Cardiac septum (tissue), 1 donor: ENCODE measurements at regions of chr14 and their contacts with region 1.

Region 1: GRCh38 chr14:77616454-77617229 is at the start of gene SPTLC2:
- DNase-seq: peak; percentile 99
- total RNA-seq, gene SPTLC2: 13.5 TPM

Region 2: DNA sequence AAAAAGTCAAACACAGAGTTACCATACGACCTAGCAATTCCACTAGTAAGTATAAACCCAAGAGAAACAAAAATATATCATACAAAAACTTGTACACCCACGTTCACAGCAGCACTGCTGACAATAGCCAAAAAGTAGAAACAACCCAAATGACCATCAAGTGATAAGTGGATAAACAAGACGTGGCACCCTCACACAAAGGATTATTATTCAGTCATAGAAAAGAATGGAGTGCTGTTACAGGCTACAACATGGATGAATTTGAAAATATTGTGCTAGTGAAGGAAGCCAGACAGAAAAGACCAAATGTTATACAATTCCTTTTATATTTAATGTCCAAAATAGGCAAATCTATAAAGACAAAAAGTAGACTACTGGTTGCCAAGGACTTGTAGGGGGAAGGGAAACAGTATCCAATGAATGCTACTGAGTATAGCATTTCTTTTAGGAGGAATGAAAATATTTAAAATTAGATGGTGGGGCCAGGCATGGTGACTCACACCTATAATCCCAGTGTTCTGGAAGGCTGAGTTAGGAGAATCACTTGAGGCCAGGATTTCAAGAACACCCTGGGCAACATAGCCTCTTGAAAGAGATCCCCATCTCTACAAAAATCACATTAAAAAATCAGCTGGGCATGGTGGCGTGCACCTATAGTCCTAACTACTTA is 42.1 kb before region 1 on chr14:
- intact Hi-C with region 1: no loop called
- DNase-seq: no peak

Region 3: GRCh38 chr14:77641534-77642341 is 25.1 kb after region 1 on chr14:
- intact Hi-C with region 1: loop called (anchors 1 kb)
- DNase-seq: peak; percentile 90

Region 4: DNA sequence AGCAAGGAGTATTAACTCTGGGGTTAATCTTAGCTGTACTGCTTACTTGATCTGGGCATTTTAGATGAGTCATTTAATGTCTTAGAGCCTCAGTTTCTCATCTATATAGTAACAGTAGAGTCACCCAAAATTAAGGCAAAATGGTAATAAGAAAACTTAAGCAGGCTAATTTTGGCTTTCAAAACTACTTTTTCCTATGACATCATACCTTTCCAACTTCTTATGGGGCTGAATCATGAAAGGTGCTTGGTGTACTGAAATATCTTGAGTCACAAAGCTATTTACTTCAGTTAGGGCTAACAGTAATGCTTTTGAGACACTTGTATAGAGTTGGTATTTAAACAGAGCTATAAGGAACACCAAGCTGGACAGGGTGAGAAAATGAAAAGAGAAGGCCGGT is 88.1 kb after region 1 on chr14:
- intact Hi-C with region 1: no loop called
- DNase-seq: no peak

Region 5: DNA sequence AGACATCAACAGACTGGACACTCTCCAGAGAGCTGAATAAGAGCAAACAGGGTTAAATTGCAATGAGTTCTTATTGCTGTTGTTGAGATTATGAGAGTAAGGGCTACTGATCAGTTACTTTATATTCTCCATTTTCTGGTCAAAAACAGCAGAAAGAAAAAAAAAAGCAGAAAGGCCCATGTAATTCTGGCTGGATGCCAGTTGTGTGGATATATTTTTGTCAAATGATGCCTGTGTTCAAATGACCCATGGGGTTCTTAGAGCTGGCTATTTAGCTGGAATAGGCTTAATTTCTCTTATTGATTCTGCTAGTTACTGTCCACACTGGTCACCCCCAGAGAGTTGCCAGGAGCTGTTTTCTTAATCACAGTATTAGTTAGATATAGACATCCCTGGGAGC is 328.6 kb after region 1 on chr14:
- intact Hi-C with region 1: no loop called
- DNase-seq: no peak